Right cardiac atrium (tissue), 5 donors: ENCODE measurements at regions of chr19 and their contacts with region 1.

Region 1: GRCh38 chr19:19488875-19489690 is 26.3 kb downstream of the TSSK6 start:
- DNase-seq: peak; percentile 83 to 91 (median 89)
- ATAC-seq: peak; percentile 65 to 77
- H3K4me3 ChIP-seq: peak overlapping the region; percentile 25
- H3K27ac ChIP-seq: peak overlapping the region; percentile 62
- H3K4me1 ChIP-seq: peaks cover 17% of the 10 kb centered on the region
- H3K27me3 ChIP-seq: no peaks in the 10 kb centered on the region

Region 2: DNA sequence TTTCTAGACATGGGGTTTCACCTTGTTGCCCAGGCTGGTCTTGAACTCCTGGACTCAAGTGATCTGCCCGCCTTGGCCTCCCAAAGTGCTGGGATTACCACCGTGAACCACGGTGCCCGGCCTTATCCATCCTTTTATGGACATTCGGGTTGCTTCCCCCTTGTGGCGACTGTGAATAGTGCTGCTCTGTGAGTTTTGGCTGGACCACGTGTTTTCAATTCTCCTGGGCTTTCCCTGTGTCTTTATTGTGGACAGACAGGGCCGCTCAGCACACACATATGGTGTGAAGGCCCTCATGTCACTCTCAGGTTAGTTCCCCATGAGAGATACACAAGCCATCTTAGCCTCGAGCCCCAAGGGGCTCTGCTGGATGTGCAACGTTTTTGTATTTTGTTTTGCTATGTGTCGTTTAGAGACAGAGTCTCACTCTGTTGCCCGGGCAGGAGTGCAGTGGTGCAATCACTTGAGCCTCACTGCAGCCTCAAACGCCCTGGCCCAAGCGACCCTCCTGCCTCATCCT is 127.9 kb before region 1 on chr19:
- intact Hi-C with region 1: loop called (anchors 2 to 5 kb)
- DNase-seq: peak; percentile 83 to 92 (median 85)
- ATAC-seq: peak; percentile 77 to 79
- H3K4me3 ChIP-seq: no peak overlapping the region
- H3K27ac ChIP-seq: no peak overlapping the region
- H3K4me1 ChIP-seq: no peaks in the 10 kb centered on the region
- H3K27me3 ChIP-seq: no peaks in the 10 kb centered on the region

Region 3: GRCh38 chr19:19366612-19367396 is 122.3 kb before region 1 on chr19:
- intact Hi-C with region 1: loop called (anchors 2 to 5 kb)
- DNase-seq: peak; percentile 58 to 88 (median 85)
- ATAC-seq: peak; percentile 81 to 82
- H3K4me3 ChIP-seq: no peak overlapping the region
- H3K27ac ChIP-seq: no peak overlapping the region
- H3K4me1 ChIP-seq: no peaks in the 10 kb centered on the region
- H3K27me3 ChIP-seq: no peaks in the 10 kb centered on the region

Region 4: GRCh38 chr19:19404879-19405860 is 83.9 kb before region 1 on chr19 and contains the start of gene GATAD2A:
- intact Hi-C with region 1: loop called in 1 of 4 experiments (anchors 10 kb)
- DNase-seq: peak; percentile 96 to 98 (median 97)
- ATAC-seq: peak; percentile 96
- H3K4me3 ChIP-seq: peak within 1 kb of the TSS; percentile 89
- H3K27ac ChIP-seq: peak within 1 kb of the TSS; percentile 82
- H3K4me1 ChIP-seq: peaks cover 12% of the 10 kb centered on the region
- H3K27me3 ChIP-seq: no peaks in the 10 kb centered on the region
- total RNA-seq, gene GATAD2A: 31.4 to 53.9 (median 36.0) TPM